Activated CD4-positive, alpha-beta T cell treated with anti-CD3 and anti-CD28 coated beads, Interleukin-2, amount 10 ng/mL, durations not matched to agents 24 days and 14 days (primary cell): ENCODE measurements at regions of chr2 and their contacts with region 1.

Region 1: DNA sequence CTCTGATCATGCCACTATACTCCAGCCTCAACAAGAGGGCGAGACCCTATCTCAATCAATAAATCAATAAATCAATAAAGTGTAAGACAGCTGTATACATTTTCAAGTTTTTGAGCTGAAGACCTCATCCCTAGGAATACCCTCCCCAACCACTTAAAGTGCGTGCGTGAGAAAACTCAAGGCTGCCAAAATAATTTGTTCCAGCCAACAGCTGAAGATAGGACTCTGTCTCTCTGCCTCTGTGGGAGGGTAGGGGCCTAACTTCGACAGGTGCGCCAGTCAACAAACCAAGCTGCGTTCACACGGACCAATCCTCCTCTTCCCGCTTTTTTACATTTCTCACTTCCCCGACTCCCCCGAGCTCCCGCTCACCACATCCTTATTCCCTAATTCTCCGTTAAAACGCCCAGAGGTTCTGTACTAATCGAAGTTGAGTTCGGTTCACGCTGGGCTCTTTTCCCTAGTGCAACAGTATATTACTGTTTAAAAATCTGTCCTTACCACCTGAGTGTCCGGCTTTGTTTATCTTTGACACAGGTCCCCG is 618 bp downstream of the POLR2D start:
- DNase-seq: peak; percentile 74
- H3K4me3 Mint-ChIP-seq: peak overlapping the region; percentile 93
- H3K27ac Mint-ChIP-seq: peak overlapping the region; percentile 90
- H3K4me1 Mint-ChIP-seq: peaks cover 27% of the 10 kb centered on the region
- H3K27me3 Mint-ChIP-seq: no peaks in the 10 kb centered on the region

Region 2: DNA sequence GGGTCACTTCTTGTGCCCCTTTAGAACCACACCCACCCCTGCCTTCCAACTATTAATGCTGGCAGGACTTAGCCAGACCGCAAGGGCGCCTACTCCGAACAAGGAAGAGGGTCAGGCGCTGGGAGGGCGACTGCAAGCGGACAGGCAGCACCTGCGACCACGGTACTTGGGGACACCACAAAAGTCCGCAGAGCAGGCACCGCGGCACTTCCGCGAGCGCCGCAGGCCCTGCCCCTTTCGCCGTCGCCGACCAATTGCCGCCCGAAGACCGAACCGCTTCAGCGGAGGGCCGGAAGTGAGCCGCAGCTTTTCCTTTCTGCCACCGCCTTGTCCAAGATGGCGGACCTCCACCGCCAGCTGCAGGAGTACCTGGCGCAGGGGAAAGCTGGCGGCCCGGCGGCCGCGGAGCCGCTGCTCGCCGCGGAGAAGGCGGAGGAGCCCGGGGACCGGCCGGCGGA is 156.1 kb before region 1 on chr2 and contains the start of gene SFT2D3:
- intact Hi-C with region 1: loop called (anchors 5 kb)
- DNase-seq: peak; percentile 97
- H3K4me3 Mint-ChIP-seq: peak within 1 kb of the TSS; percentile 92
- H3K27ac Mint-ChIP-seq: peak within 1 kb of the TSS; percentile 94
- H3K4me1 Mint-ChIP-seq: peaks cover 27% of the 10 kb centered on the region
- H3K27me3 Mint-ChIP-seq: no peaks in the 10 kb centered on the region
- total RNA-seq, gene SFT2D3: 5.9 and 6.3 TPM in 2 replicates

Region 3: DNA sequence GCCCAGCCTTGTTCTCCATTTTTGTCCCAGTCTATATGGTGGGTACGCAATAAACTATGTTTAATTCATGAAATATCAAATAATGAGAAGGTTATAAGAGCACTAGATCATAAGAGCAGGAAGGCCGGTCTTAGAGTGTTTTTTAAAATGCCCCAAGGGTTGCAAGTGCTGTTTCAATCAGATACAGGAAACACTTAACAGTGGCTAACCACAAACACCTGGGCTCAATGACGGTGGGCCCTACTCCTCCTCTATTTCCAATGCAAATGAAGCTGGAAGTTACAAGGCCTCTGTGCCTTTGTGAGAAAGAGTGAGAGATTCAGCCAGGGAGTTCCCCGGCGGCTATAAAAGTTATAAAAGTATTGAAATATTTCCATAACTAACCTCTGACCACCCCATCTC is 27.5 kb before region 1 on chr2:
- intact Hi-C with region 1: loop called (anchors 1 kb)
- DNase-seq: peak; percentile 90
- H3K4me3 Mint-ChIP-seq: peak overlapping the region; percentile 53
- H3K27ac Mint-ChIP-seq: peak overlapping the region; percentile 68
- H3K4me1 Mint-ChIP-seq: peaks cover 19% of the 10 kb centered on the region
- H3K27me3 Mint-ChIP-seq: peaks cover 2% of the 10 kb centered on the region

Region 4: GRCh38 chr2:127874378-127875271 is 17.3 kb after region 1 on chr2:
- intact Hi-C with region 1: loop called (anchors 2 kb)
- DNase-seq: peak; percentile 72
- H3K4me3 Mint-ChIP-seq: peak overlapping the region; percentile 37
- H3K27ac Mint-ChIP-seq: peak overlapping the region; percentile 79
- H3K4me1 Mint-ChIP-seq: peaks cover 30% of the 10 kb centered on the region
- H3K27me3 Mint-ChIP-seq: no peaks in the 10 kb centered on the region

Region 5: DNA sequence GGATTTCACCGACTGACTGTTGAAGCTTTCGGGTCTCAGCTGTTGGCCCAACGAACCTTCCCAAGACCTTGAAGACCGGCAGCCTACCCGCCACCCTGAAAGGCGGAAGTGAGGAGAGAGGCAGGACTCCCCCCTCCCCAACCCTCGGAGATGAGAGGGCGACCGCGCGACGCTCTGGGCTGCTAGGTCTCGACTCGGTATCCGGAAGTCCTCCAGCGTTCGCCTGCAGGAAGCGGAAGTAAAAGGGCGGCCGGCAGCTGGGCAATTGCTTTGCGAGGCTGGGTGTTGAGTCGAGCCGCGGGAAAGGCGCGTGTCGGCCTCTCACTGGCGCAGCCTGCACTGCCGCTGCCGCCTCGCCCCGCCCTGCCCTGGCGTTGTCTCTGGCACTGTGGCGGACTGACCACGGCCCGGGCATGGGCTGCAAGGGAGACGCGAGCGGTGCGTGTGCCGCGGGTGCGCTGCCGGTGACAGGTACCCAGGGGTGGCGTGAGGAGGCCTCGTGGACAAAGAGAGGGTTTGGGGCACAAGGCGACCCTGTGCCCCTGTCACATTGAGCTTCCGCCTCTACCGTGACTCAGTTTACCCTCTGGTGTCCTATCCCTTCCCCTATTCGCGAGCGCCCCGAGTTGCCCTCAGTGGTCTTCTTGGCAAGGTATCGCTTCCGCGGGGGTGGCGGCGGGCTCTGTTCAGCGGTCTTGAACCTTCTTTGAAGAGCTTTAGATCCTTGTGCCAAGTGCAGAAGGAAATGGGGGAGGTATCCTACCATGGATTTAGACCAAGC is 233.8 kb after region 1 on chr2 and contains the start of gene UGGT1:
- intact Hi-C with region 1: loop called (anchors 1 kb)
- DNase-seq: peak; percentile 98
- H3K4me3 Mint-ChIP-seq: peak within 1 kb of the TSS; percentile 89
- H3K27ac Mint-ChIP-seq: peak within 1 kb of the TSS; percentile 93
- H3K4me1 Mint-ChIP-seq: peaks cover 23% of the 10 kb centered on the region
- H3K27me3 Mint-ChIP-seq: no peaks in the 10 kb centered on the region
- total RNA-seq, gene UGGT1: 69.9 and 72.1 TPM in 2 replicates